Ovary (tissue), 10 donors: ENCODE measurements at regions of chr7 and their contacts with region 1.

Region 1: GRCh38 chr7:121547544-121548092 is 151.5 kb upstream of the FAM3C start:
- DNase-seq: no peak
- H3K4me3 ChIP-seq: no peak overlapping the region
- H3K27ac ChIP-seq: no peak overlapping the region
- H3K4me1 ChIP-seq: no peaks in the 10 kb centered on the region
- H3K27me3 ChIP-seq: no peaks in the 10 kb centered on the region
- CTCF ChIP-seq: peak; percentile 31 to 87 (median 67)
- EP300 ChIP-seq: no peak
- POLR2A ChIP-seq: no peak

Region 2: DNA sequence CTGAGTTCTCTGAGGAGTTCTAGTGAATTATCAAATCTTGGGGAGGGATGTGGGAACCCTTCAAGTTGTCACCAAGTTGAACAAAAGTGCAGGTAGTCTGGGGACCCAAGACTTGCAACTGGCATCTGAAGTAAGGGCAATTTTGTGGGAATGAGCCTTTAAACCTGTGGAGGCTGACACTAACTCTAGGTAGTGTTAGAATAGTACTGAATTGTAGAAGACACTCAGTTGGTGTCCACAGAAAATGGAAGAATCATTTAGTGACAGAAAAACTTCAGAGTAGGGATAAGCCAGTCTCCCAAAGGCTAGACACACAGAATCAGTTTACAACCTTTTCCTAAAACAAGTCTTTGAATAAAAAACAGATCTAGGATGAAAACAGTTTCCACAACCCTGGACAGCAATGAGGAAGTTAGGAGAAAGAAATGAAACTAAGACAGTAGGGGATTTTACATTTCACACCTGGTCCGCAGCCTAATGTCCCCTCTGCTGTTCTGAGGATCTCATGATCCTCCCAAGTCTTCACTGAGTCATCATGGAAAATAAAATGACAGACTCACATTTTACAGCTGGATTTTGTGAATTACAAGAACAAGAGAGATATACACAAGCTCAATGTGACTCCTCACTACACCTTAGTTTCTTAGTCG is 620.0 kb before region 1 on chr7:
- intact Hi-C with region 1: no loop called
- DNase-seq: no peak
- H3K4me3 ChIP-seq: no peak overlapping the region
- H3K27ac ChIP-seq: no peak overlapping the region
- H3K4me1 ChIP-seq: no peaks in the 10 kb centered on the region
- H3K27me3 ChIP-seq: no peaks in the 10 kb centered on the region
- CTCF ChIP-seq: no peak
- EP300 ChIP-seq: no peak
- POLR2A ChIP-seq: no peak

Region 3: GRCh38 chr7:121126801-121127534 is 420.6 kb before region 1 on chr7:
- intact Hi-C with region 1: no loop called
- DNase-seq: no peak
- H3K4me3 ChIP-seq: no peak overlapping the region
- H3K27ac ChIP-seq: no peak overlapping the region
- H3K4me1 ChIP-seq: no peaks in the 10 kb centered on the region
- H3K27me3 ChIP-seq: no peaks in the 10 kb centered on the region
- CTCF ChIP-seq: no peak
- EP300 ChIP-seq: no peak
- POLR2A ChIP-seq: no peak

Region 4: GRCh38 chr7:121366852-121367431 is 180.7 kb before region 1 on chr7:
- intact Hi-C with region 1: loop called (anchors 2 to 5 kb)
- DNase-seq: peak in 1 of 5 donors; percentile 23
- H3K4me3 ChIP-seq: no peak overlapping the region
- H3K27ac ChIP-seq: no peak overlapping the region
- H3K4me1 ChIP-seq: no peaks in the 10 kb centered on the region
- H3K27me3 ChIP-seq: no peaks in the 10 kb centered on the region
- CTCF ChIP-seq: peak; percentile 39 to 81 (median 59)
- EP300 ChIP-seq: no peak
- POLR2A ChIP-seq: no peak

Region 5: DNA sequence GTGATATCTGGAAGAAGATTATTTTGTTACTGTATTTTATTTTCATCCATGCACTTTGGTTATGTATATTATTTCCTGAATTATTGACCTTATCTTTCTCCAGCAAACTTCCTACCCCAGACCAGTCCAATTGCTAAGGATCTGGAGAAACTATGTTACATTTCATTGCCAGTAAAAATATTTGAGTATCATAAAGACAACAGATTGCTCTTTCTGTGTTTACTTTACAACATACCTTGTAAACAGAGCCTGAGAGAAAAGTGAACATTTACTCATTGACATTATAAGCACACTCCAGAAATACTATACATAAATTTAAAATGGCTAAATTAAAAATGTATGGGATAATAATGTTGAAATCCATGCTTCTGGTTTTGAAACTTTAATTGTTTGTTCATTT is 34.6 kb after region 1 on chr7:
- intact Hi-C with region 1: no loop called
- DNase-seq: no peak
- H3K4me3 ChIP-seq: no peak overlapping the region
- H3K27ac ChIP-seq: no peak overlapping the region
- H3K4me1 ChIP-seq: no peaks in the 10 kb centered on the region
- H3K27me3 ChIP-seq: no peaks in the 10 kb centered on the region
- CTCF ChIP-seq: no peak
- EP300 ChIP-seq: no peak
- POLR2A ChIP-seq: no peak